ENCODE measurements at regions of chrX and their contacts with region 1.

Region 1: DNA sequence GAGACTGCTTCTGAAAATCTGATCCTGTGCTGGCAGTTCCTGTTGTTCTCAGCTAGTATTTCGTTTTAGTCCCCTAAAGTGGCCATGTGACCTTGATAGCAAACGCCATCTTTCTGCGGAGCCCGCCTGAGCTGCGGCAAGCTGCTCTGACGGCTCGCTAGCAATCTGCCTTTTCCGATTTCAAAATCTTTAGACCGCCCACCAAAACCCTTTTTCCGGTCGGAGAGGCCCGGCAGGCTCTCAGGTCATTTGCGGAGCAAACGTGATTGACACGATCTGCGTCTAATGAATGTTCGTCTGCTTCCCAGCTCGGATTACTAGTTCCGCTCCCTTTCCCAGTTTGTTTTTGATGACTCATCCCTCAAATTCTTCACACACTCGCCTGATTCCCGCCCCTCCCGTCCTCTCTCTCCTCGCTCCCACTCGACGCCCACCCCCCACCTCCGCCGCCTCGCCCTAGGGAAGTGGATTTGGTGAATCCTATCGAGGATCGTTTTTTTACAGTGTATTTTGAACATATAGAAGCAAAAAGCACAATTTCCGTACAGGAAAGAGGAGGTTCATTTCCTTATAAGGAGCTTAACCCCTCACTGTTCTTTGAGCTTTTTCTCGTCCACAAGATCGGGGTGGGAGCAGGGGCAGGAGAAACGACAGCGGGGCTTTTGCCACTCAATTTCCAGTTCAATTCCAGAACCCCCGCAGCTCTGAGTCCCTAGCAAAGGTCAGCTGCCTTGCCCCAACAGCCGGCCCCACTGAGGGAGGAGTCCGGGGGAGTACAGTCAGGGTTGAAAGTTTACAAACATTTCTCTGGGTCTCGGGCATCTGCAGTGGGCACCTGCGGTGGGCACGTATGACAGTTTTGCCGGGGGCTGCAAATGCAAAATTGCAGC is 37.5 kb downstream of the NLGN3 start:
- DNase-seq: peak; percentile 90 to 95
- H3K4me3 ChIP-seq: peak overlapping the region; percentile 32
- H3K4me3 Mint-ChIP-seq: peak overlapping the region; percentile 76
- H3K27ac Mint-ChIP-seq: peak overlapping the region; percentile 96
- H3K4me1 ChIP-seq: peaks cover 47% of the 10 kb centered on the region
- H3K4me1 Mint-ChIP-seq: peaks cover 17% of the 10 kb centered on the region
- H3K27me3 ChIP-seq: no peaks in the 10 kb centered on the region
- H3K27me3 Mint-ChIP-seq: no peaks in the 10 kb centered on the region
- CTCF ChIP-seq: no peak

Region 2: GRCh38 chrX:70998411-70999027 is 183.6 kb before region 1 on chrX:
- CTCF ChIA-PET with region 1: interaction called, 3 read pairs
- POLR2A ChIA-PET with region 1: no interaction called
- intact Hi-C with region 1: loop called (anchors 2 kb)
- DNase-seq: peak; percentile 45 to 50
- H3K4me3 ChIP-seq: no peak overlapping the region
- H3K4me3 Mint-ChIP-seq: no peak overlapping the region
- H3K27ac Mint-ChIP-seq: no peak overlapping the region
- H3K4me1 ChIP-seq: no peaks in the 10 kb centered on the region
- H3K4me1 Mint-ChIP-seq: peaks cover 21% of the 10 kb centered on the region
- H3K27me3 ChIP-seq: no peaks in the 10 kb centered on the region
- H3K27me3 Mint-ChIP-seq: no peaks in the 10 kb centered on the region
- CTCF ChIP-seq: peak in 1 of 2 experiments; percentile 51

Region 3: GRCh38 chrX:71095543-71095911 is 86.6 kb before region 1 on chrX and contains the start of gene FOXO4:
- CTCF ChIA-PET with region 1: no interaction called
- POLR2A ChIA-PET with region 1: no interaction called
- intact Hi-C with region 1: loop called (anchors 1 kb)
- DNase-seq: peak; percentile 87 to 88
- H3K4me3 ChIP-seq: peak within 1 kb of the TSS; percentile 66
- H3K4me3 Mint-ChIP-seq: peak within 1 kb of the TSS; percentile 91
- H3K27ac Mint-ChIP-seq: peak within 1 kb of the TSS; percentile 57
- H3K4me1 ChIP-seq: no peaks in the 10 kb centered on the region
- H3K4me1 Mint-ChIP-seq: no peaks in the 10 kb centered on the region
- H3K27me3 ChIP-seq: no peaks in the 10 kb centered on the region
- H3K27me3 Mint-ChIP-seq: no peaks in the 10 kb centered on the region
- CTCF ChIP-seq: no peak
- total RNA-seq, gene FOXO4: 13.7 and 17.4 TPM in 2 replicates

Region 4: DNA sequence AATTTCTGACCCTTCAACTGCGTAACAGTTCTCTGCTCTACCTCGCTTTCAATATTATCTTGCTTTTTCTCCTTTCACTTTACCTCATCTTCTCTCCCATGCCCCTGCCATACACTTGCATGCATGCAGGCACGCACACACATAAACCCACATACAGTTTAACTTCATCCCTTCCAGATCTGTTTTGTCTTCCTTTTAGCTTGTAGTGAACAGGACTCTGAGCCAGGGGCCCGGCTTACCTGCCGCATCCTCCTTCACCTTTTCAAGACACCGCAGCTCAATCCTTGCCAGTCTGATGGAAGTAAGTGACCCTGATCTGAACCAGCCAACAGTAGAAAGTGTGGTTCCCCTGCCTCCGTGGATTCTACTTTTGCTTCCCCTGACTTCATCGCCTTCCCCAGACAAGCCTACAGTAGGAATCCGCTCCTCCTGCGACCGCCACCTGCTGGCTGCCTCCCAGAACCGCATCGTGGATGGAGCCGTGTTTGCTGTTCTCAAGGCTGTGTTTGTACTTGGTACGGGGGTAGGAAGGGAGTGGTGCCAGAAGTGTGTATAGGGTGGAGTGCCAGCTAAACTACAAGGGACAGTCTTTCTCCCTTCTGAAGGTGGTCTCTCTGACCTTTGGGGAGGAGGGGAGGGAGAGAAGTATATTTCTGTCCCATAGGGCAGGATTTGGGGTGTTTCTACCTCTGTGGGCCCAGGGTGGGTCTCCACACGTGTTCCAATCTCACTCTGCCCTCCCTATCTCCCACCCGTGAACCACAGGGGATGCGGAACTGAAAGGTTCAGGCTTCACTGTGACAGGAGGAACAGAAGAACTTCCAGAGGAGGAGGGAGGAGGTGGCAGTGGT is 53.0 kb before region 1 on chrX:
- CTCF ChIA-PET with region 1: interaction called, 3 read pairs
- POLR2A ChIA-PET with region 1: no interaction called
- intact Hi-C with region 1: loop called (anchors 5 kb)
- DNase-seq: peak; percentile 52 to 70
- H3K4me3 ChIP-seq: no peak overlapping the region
- H3K4me3 Mint-ChIP-seq: no peak overlapping the region
- H3K27ac Mint-ChIP-seq: peak overlapping the region; percentile 5
- H3K4me1 ChIP-seq: no peaks in the 10 kb centered on the region
- H3K4me1 Mint-ChIP-seq: peaks cover 17% of the 10 kb centered on the region
- H3K27me3 ChIP-seq: no peaks in the 10 kb centered on the region
- H3K27me3 Mint-ChIP-seq: no peaks in the 10 kb centered on the region
- CTCF ChIP-seq: peak; percentile 68 to 76

Region 5: GRCh38 chrX:71254092-71254941 is 72.2 kb after region 1 on chrX and contains the start of gene ZMYM3:
- CTCF ChIA-PET with region 1: no interaction called
- POLR2A ChIA-PET with region 1: interaction called, 5 read pairs
- intact Hi-C with region 1: loop called (anchors 1 kb)
- DNase-seq: peak; percentile 84 to 88
- H3K4me3 ChIP-seq: peak within 1 kb of the TSS; percentile 89
- H3K4me3 Mint-ChIP-seq: peak within 1 kb of the TSS; percentile 85
- H3K27ac Mint-ChIP-seq: peak within 1 kb of the TSS; percentile 82
- H3K4me1 ChIP-seq: peaks cover 15% of the 10 kb centered on the region; the same call in 1 of the 2 replicates
- H3K4me1 Mint-ChIP-seq: peaks cover 7% of the 10 kb centered on the region
- H3K27me3 ChIP-seq: no peaks in the 10 kb centered on the region
- H3K27me3 Mint-ChIP-seq: no peaks in the 10 kb centered on the region
- CTCF ChIP-seq: no peak
- total RNA-seq, gene ZMYM3: 51.9 and 55.1 TPM in 2 replicates

Region 6: DNA sequence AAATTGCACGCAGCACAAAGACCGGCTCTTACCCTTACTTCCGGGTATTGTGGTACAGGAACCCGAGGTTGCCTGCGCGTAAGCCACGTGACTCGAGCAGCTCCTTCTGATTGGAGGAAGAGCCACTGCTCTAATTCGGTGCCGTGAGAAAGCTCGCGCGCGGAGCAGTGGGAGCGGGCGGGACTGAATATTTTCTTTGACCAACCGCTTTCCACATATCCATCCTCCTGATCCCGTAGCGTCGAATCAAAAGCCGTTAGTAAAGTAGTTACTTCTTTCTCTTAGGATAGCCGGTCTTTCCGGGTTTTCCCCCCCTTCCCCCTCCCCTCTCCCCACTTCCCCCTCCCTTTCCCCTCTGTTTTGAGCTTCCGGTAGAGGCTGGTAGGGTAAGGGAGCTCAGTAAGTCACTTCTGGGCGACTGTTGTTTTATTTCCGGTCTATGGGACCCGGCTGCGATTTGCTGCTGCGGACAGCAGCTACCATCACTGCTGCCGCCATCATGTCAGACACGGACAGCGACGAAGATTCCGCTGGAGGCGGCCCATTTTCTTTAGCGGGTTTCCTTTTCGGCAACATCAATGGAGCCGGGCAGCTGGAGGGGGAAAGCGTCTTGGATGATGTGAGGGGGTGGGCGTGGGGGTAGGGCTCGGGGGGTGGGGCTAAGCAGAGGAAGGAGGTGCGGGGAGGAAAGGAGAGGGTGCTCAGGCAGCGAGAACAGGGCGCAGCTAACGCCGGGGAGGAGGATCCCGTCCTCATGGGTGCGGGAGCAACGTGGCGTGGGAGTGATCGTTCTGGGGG is 183.9 kb after region 1 on chrX and contains the start of gene TAF1:
- CTCF ChIA-PET with region 1: interaction called, 4 read pairs
- POLR2A ChIA-PET with region 1: interaction called, 12 read pairs
- intact Hi-C with region 1: loop called (anchors 2 kb)
- DNase-seq: peak; percentile 91 to 96
- H3K4me3 ChIP-seq: peak within 1 kb of the TSS; percentile 71
- H3K4me3 Mint-ChIP-seq: peak within 1 kb of the TSS; percentile 94
- H3K27ac Mint-ChIP-seq: peak within 1 kb of the TSS; percentile 95
- H3K4me1 ChIP-seq: no peaks in the 10 kb centered on the region
- H3K4me1 Mint-ChIP-seq: no peaks in the 10 kb centered on the region
- H3K27me3 ChIP-seq: no peaks in the 10 kb centered on the region
- H3K27me3 Mint-ChIP-seq: no peaks in the 10 kb centered on the region
- CTCF ChIP-seq: no peak
- total RNA-seq, gene TAF1: 40.7 and 41.2 TPM in 2 replicates

Measured in Caco-2 (cell line).